ENCODE measurements at regions of chr2 and their contacts with region 1.

Region 1: GRCh38 chr2:201118121-201118960 is 2.4 kb downstream of the CFLAR start:
- DNase-seq: peak; percentile 75 to 94 (median 78)
- H3K4me3 ChIP-seq: peak overlapping the region; percentile 78 to 98
- H3K4me3 Mint-ChIP-seq: peak overlapping the region; percentile 93 to 100 (median 100)
- H3K27ac ChIP-seq: peak overlapping the region; percentile 91
- H3K27ac Mint-ChIP-seq: peak overlapping the region; percentile 92 to 100 (median 99)
- H3K4me1 ChIP-seq: peaks cover 55% of the 10 kb centered on the region
- H3K4me1 Mint-ChIP-seq: peaks cover 34 to 87% (median 47%) of the 10 kb centered on the region in 4 donors
- H3K27me3 ChIP-seq: no peaks in the 10 kb centered on the region
- H3K27me3 Mint-ChIP-seq: peaks cover 0 to 2% of the 10 kb centered on the region in 2 donors

Region 2: GRCh38 chr2:200811336-200812121 is 306.8 kb before region 1 on chr2 and contains the start of gene BZW1:
- CTCF ChIA-PET with region 1: no interaction called
- POLR2A ChIA-PET with region 1: interaction called, 6 read pairs
- intact Hi-C with region 1: loop called (anchors 2 kb)
- DNase-seq: peak; percentile 97 to 98 (median 98)
- H3K4me3 ChIP-seq: peak within 1 kb of the TSS; percentile 58 to 67
- H3K4me3 Mint-ChIP-seq: peak within 1 kb of the TSS; percentile 95 to 100 (median 98)
- H3K27ac ChIP-seq: peak within 1 kb of the TSS; percentile 97
- H3K27ac Mint-ChIP-seq: peak within 1 kb of the TSS; percentile 96 to 99 (median 98)
- H3K4me1 ChIP-seq: peaks cover 41% of the 10 kb centered on the region
- H3K4me1 Mint-ChIP-seq: peaks cover 35 to 62% (median 43%) of the 10 kb centered on the region in 4 donors
- H3K27me3 ChIP-seq: no peaks in the 10 kb centered on the region
- H3K27me3 Mint-ChIP-seq: no peaks in the 10 kb centered on the region
- total RNA-seq, gene BZW1: 126 to 133 TPM

Region 3: GRCh38 chr2:200901459-200902072 is 216.8 kb before region 1 on chr2:
- CTCF ChIA-PET with region 1: interaction called, 4 read pairs
- POLR2A ChIA-PET with region 1: no interaction called
- intact Hi-C with region 1: loop called (anchors 2 kb)
- DNase-seq: peak; percentile 76 to 83 (median 79)
- H3K4me3 ChIP-seq: no peak overlapping the region
- H3K4me3 Mint-ChIP-seq: no peak overlapping the region
- H3K27ac ChIP-seq: peak overlapping the region; percentile 1
- H3K27ac Mint-ChIP-seq: peak overlapping the region; percentile 10 to 81 (median 65)
- H3K4me1 ChIP-seq: no peaks in the 10 kb centered on the region
- H3K4me1 Mint-ChIP-seq: peaks cover 6 to 7% (median 6%) of the 10 kb centered on the region in 4 donors
- H3K27me3 ChIP-seq: no peaks in the 10 kb centered on the region
- H3K27me3 Mint-ChIP-seq: no peaks in the 10 kb centered on the region

Region 4: GRCh38 chr2:201130524-201131186 is 12.3 kb after region 1 on chr2:
- CTCF ChIA-PET with region 1: interaction called, 92 read pairs
- POLR2A ChIA-PET with region 1: no interaction called
- intact Hi-C with region 1: loop called (anchors 1 kb)
- DNase-seq: peak; percentile 42 to 85 (median 55)
- H3K4me3 ChIP-seq: peak overlapping the region in 1 of 2 donors; percentile 34
- H3K4me3 Mint-ChIP-seq: peak overlapping the region; percentile 72 to 86 (median 80)
- H3K27ac ChIP-seq: peak overlapping the region; percentile 64
- H3K27ac Mint-ChIP-seq: peak overlapping the region; percentile 87 to 98 (median 97)
- H3K4me1 ChIP-seq: peaks cover 89% of the 10 kb centered on the region
- H3K4me1 Mint-ChIP-seq: peaks cover 64 to 81% (median 72%) of the 10 kb centered on the region in 4 donors
- H3K27me3 ChIP-seq: no peaks in the 10 kb centered on the region
- H3K27me3 Mint-ChIP-seq: no peaks in the 10 kb centered on the region

Region 5: GRCh38 chr2:201158111-201158929 is 40.0 kb after region 1 on chr2:
- CTCF ChIA-PET with region 1: interaction called, 107 read pairs
- POLR2A ChIA-PET with region 1: interaction called, 127 read pairs
- intact Hi-C with region 1: loop called (anchors 1 kb)
- DNase-seq: peak; percentile 64 to 75 (median 68)
- H3K4me3 ChIP-seq: no peak overlapping the region
- H3K4me3 Mint-ChIP-seq: peak overlapping the region in 3 of 8 donors; percentile 26 to 52 (median 30)
- H3K27ac ChIP-seq: peak overlapping the region; percentile 44
- H3K27ac Mint-ChIP-seq: peak overlapping the region; percentile 69 to 95 (median 89)
- H3K4me1 ChIP-seq: peaks cover 19% of the 10 kb centered on the region
- H3K4me1 Mint-ChIP-seq: peaks cover 9 to 23% (median 16%) of the 10 kb centered on the region in 4 donors
- H3K27me3 ChIP-seq: no peaks in the 10 kb centered on the region
- H3K27me3 Mint-ChIP-seq: no peaks in the 10 kb centered on the region

Region 6: GRCh38 chr2:201194097-201194496 is 75.8 kb after region 1 on chr2:
- CTCF ChIA-PET with region 1: interaction called, 4 read pairs
- POLR2A ChIA-PET with region 1: interaction called, 25 read pairs
- intact Hi-C with region 1: no loop called
- DNase-seq: peak in 3 of 5 donors; percentile 29 to 36 (median 32)
- H3K4me3 ChIP-seq: no peak overlapping the region
- H3K4me3 Mint-ChIP-seq: peak overlapping the region; percentile 54 to 93 (median 80)
- H3K27ac ChIP-seq: peak overlapping the region; percentile 41
- H3K27ac Mint-ChIP-seq: peak overlapping the region; percentile 62 to 95 (median 91)
- H3K4me1 ChIP-seq: peaks cover 77% of the 10 kb centered on the region
- H3K4me1 Mint-ChIP-seq: peaks cover 46 to 79% (median 62%) of the 10 kb centered on the region in 4 donors
- H3K27me3 ChIP-seq: no peaks in the 10 kb centered on the region
- H3K27me3 Mint-ChIP-seq: no peaks in the 10 kb centered on the region